ENCODE measurements at regions of chr7 and their contacts with region 1.

Region 1: DNA sequence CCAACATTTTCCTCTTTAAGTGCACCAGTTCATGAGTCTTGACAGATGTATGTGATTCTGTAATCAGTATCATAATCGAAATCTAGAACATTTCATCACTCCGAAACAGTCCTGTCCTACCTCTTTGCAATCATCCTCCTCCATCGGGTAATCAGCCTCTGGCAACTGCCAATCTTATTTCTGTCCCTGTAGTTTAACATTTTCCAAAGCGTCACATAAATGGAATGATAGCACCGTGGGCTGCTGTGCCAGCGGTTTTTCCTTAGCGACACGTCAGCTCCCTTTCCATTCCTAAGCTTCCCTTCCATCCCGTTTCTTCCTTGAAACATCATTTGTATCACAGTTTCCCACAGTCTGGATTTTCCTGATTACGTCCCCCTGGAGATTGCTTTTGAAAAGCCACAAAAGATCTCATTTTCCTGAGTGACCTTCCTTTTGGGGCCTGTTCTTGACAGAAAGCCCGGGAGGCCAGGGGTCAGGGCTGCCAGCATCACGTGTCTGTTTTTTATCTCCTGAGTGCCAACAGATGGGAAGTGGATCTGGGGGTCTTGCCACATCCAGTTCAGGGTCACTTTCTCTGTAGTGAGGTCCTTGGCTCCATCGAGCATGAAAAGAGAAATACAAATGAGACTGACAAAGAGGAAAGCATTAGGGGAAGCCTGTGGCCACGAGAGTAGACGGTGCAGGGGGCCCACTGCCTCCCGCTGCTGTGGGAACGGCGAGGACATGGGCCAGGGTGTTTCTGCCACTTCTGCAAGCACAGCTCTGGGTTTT is 31.6 kb downstream of the TMEM120A start:
- DNase-seq: peak; percentile 37
- H3K4me3 ChIP-seq: no peak overlapping the region
- CTCF ChIP-seq: peak; percentile 5

Region 2: GRCh38 chr7:75819711-75820110 is 143.1 kb before region 1 on chr7:
- in situ Hi-C with region 1: no loop called
- DNase-seq: no peak
- H3K4me3 ChIP-seq: no peak overlapping the region
- CTCF ChIP-seq: no peak

Region 3: GRCh38 chr7:75905785-75906604 is 56.8 kb before region 1 on chr7:
- in situ Hi-C with region 1: loop called (anchors 5 kb)
- DNase-seq: no peak
- H3K4me3 ChIP-seq: no peak overlapping the region
- CTCF ChIP-seq: no peak